CD8-positive, alpha-beta T cell (primary cell): ENCODE measurements at regions of chr20 and their contacts with region 1.

Region 1: GRCh38 chr20:1764136-1765033 is 106.8 kb upstream of the SIRPG start:
- DNase-seq: peak; percentile 30 to 73 (median 57)
- ATAC-seq: peak; percentile 75
- H3K4me3 ChIP-seq: no peak overlapping the region
- H3K4me3 Mint-ChIP-seq: no peak overlapping the region
- H3K27ac ChIP-seq: no peak overlapping the region
- H3K27ac Mint-ChIP-seq: no peak overlapping the region
- H3K4me1 ChIP-seq: no peaks in the 10 kb centered on the region
- H3K4me1 Mint-ChIP-seq: no peaks in the 10 kb centered on the region
- H3K27me3 ChIP-seq: no peaks in the 10 kb centered on the region
- H3K27me3 Mint-ChIP-seq: peaks cover 2% of the 10 kb centered on the region
- CTCF ChIP-seq: peak; percentile 88

Region 2: DNA sequence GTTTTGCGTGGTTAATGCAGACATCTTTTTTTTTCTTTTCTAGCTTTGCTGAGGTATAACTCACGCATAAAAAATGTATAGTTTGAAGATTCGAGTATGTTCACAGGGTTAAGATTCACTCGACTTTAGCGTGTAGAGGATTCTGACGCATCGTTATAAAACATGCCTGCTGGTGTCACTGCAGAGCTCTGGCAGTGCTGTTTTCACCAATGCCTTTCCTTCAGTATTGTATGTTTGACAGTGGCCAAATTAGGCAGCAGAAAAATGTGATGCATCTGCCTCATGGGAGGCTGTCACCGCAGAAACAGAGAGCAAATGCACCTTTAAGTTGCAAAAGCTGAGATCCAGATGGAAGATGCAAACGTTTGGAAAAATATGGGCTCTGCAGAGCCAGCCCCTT is 255.1 kb before region 1 on chr20:
- CTCF ChIA-PET with region 1: interaction called, 15 read pairs
- POLR2A ChIA-PET with region 1: no interaction called
- intact Hi-C with region 1: no loop called
- DNase-seq: peak in 6 of 9 experiments; percentile 10 to 54 (median 31)
- ATAC-seq: peak; percentile 69
- H3K4me3 ChIP-seq: no peak overlapping the region
- H3K4me3 Mint-ChIP-seq: no peak overlapping the region
- H3K27ac ChIP-seq: no peak overlapping the region
- H3K27ac Mint-ChIP-seq: no peak overlapping the region
- H3K4me1 ChIP-seq: no peaks in the 10 kb centered on the region
- H3K4me1 Mint-ChIP-seq: peaks cover 2% of the 10 kb centered on the region
- H3K27me3 ChIP-seq: no peaks in the 10 kb centered on the region
- H3K27me3 Mint-ChIP-seq: peaks cover 4% of the 10 kb centered on the region
- CTCF ChIP-seq: peak; percentile 38